ENCODE measurements at regions of chr9 and their contacts with region 1.

Region 1: GRCh38 chr9:8683496-8683895 is 883.9 kb upstream of the DMAC1 start:
- DNase-seq: no peak
- H3K4me3 ChIP-seq: no peak overlapping the region
- H3K27ac ChIP-seq: no peak overlapping the region
- H3K4me1 ChIP-seq: no peaks in the 10 kb centered on the region
- H3K27me3 ChIP-seq: no peaks in the 10 kb centered on the region

Region 2: GRCh38 chr9:8604201-8604600 is 79.3 kb before region 1 on chr9:
- CTCF ChIA-PET with region 1: no interaction called
- POLR2A ChIA-PET with region 1: no interaction called
- DNase-seq: no peak
- H3K4me3 ChIP-seq: no peak overlapping the region
- H3K27ac ChIP-seq: no peak overlapping the region
- H3K4me1 ChIP-seq: no peaks in the 10 kb centered on the region
- H3K27me3 ChIP-seq: no peaks in the 10 kb centered on the region

Region 3: DNA sequence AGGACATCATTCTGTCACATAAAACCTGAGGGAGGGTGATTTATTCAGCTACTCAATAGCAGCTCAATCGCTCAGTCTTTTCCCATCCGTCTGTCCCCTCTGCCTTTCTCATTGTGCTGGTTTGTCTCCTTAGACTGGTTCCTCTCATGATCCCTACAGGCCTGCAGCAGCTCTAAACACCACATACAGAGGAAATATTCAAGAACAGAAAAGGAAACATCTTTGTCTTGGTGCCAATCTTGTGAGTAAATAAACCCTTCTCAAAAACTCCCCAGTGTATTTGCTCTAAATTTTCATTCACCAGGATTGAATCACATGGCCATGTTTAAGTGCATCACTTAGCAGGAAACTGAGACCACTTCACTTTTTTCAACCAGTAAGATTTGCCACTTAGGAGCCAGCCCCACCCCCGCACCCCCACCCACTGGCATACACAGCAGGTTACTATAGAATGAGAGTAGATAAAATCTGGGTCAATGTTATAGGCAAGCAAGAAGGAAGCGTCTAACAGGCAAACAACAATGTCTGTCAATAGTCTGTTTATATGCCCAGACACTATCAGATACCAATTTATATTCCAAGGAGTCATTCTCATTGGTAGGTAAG is 11.6 kb after region 1 on chr9:
- CTCF ChIA-PET with region 1: interaction called, 13 read pairs
- POLR2A ChIA-PET with region 1: no interaction called
- DNase-seq: no peak
- H3K4me3 ChIP-seq: no peak overlapping the region
- H3K27ac ChIP-seq: no peak overlapping the region
- H3K4me1 ChIP-seq: peaks cover 6 to 22% (median 16%) of the 10 kb centered on the region in 4 experiments
- H3K27me3 ChIP-seq: no peaks in the 10 kb centered on the region

Region 4: DNA sequence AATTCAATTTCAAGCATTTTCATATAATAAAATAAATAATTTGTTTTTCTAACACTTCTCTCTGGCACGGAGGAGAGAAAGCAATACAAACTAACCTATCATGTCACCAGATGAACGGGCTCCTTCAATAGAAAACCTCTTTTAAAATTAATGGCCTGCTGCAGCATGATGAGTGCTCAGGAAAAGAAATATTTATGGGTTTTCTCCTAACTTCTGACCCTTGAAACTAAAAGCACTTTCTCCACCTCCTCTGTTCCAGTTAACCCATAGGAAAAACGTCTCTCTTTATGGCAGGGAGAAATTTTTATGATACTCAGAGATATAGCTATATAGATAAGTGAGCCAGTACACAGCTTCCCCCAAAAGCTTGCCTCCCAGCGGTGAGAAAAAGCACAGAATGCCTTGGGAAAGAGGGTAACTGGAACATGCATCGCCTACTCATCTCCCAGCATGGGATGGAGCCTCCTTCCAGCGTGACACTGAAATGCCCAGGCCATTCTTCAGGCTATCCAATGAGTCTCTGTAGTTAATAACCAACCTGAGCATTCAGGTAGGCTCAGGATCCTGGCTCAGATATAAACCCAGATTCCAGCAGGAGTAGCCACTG is 79.1 kb after region 1 on chr9:
- CTCF ChIA-PET with region 1: no interaction called
- POLR2A ChIA-PET with region 1: no interaction called
- DNase-seq: no peak
- H3K4me3 ChIP-seq: no peak overlapping the region
- H3K27ac ChIP-seq: no peak overlapping the region
- H3K4me1 ChIP-seq: peaks cover 0 to 6% (median 4%) of the 10 kb centered on the region in 4 experiments
- H3K27me3 ChIP-seq: no peaks in the 10 kb centered on the region

Region 5: DNA sequence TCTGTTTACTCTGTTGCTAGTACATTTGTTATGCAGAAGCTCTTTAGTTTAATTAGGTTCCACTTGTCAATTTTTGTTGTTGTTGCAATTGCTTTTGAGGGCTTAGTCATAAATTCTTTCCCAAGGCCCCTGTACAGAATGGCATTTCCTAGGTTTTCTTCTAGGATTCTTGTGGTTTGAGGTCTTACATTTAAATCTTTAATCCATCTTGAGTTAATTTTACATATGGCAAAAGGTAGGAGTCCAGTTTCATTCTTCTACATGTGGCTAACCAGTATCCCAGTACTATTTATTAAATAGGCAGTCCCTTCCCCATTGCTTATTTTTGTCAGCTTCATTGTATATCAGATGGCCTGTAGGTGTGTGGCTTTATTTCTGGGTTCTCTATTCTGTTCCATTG is 1136.9 kb after region 1 on chr9:
- CTCF ChIA-PET with region 1: no interaction called
- POLR2A ChIA-PET with region 1: no interaction called
- DNase-seq: no peak
- H3K4me3 ChIP-seq: no peak overlapping the region
- H3K27ac ChIP-seq: no peak overlapping the region
- H3K4me1 ChIP-seq: no peaks in the 10 kb centered on the region
- H3K27me3 ChIP-seq: no peaks in the 10 kb centered on the region